H1 (cell line): ENCODE measurements at regions of chr3 and their contacts with region 1.

Region 1: DNA sequence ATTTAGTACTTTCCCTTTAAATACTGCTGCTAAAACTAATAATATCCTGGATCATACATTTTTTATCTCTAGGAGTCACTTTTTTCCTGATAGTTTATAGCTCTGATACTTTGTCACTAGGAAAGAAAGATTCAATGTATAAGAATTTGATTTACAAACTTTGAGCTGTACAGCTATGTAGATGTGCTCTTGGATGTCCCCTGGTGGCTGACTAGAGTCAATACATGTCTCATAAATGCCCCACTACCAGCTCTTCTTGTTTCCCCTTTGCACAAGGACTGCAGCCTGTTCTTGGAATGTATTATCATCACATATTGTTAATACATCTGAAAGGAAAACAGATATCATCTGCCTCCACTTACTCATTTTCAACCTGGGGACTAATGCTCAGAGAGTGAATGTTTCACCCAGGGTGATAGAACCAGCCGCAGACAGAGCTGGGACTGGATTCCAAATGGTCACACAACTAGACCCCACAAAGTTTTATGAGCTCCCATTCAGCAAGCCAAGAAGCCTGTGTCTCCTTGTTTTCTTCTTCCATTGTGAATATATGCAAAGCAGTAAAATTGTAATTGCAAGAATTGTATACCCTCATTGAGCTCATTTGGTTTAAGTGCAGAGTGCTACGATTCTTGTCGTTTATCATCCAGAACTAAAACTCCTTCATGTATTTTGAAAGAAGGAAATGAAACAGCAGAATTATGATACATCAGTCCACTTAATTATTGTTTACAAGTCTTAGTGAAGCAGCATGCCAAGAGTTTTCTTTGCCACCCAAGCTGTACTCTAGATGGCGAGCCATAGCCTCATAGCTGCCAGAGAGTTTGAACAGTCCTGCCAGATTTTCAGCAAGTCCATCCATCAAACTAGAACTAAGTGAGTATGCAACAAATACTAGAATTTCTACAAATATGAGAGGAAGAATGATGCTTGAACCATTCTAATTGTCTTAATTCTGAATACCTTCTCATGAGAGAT is 261.6 kb upstream of the LMCD1 start:
- DNase-seq: peak in 1 of 2 experiments; percentile 49
- H3K4me3 ChIP-seq: no peak overlapping the region
- H3K27ac ChIP-seq: no peak overlapping the region
- H3K4me1 ChIP-seq: no peaks in the 10 kb centered on the region; a peak in 1 of 7 replicates
- H3K27me3 ChIP-seq: no peaks in the 10 kb centered on the region
- CTCF ChIP-seq: peak in 2 of 3 experiments; percentile 60 to 70; a peak in 3 of 4 replicates
- EP300 ChIP-seq: no peak
- POLR2A ChIP-seq: no peak
- RAD21 ChIP-seq: peak; percentile 64 to 71

Region 2: DNA sequence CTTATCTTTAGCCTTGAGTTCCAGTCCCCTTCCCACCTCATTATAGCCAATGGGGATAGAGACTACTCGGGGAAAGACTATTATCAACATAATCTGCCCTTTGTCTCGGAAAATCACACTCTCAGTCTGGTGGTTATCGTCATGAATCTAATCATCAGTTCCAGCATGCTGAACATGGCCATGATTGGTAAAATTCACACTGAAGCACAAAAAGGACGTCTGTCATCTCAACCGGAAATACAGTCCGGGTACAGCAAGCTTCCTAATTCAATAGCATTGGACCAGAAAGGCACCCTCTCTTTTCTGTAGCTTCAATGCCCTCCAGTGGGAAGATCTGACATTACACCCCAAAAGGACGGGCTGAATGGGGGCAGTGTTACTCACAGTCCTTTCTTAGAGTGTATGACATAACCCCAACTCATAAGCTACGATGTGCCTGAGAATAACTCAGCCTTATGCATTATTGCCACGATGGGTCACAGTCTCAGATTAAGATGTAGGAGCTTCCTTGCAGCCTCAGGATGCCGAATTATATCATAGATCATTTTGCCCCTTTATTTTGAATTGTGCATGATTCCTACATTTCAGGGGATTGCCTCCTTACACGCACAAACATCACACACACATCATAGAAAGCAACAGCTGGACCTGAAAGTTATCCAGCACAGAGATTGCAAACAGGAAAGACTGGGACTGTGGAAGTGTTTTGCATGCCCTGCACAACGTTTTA is 128.8 kb before region 1 on chr3:
- CTCF ChIA-PET with region 1: interaction called, 22 read pairs
- POLR2A ChIA-PET with region 1: no interaction called
- DNase-seq: peak; percentile 34 to 86
- H3K4me3 ChIP-seq: no peak overlapping the region
- H3K27ac ChIP-seq: no peak overlapping the region
- H3K4me1 ChIP-seq: peaks cover 0 to 21% (median 8%) of the 10 kb centered on the region in 4 experiments; a peak in 5 of 7 replicates
- H3K27me3 ChIP-seq: no peaks in the 10 kb centered on the region
- CTCF ChIP-seq: peak; percentile 42 to 88 (median 87)
- EP300 ChIP-seq: no peak
- POLR2A ChIP-seq: no peak
- RAD21 ChIP-seq: peak; percentile 97 to 98

Region 3: GRCh38 chr3:8197384-8197783 is 42.6 kb before region 1 on chr3:
- CTCF ChIA-PET with region 1: no interaction called
- POLR2A ChIA-PET with region 1: no interaction called
- DNase-seq: no peak
- H3K4me3 ChIP-seq: no peak overlapping the region
- H3K27ac ChIP-seq: no peak overlapping the region
- H3K4me1 ChIP-seq: no peaks in the 10 kb centered on the region; a peak in 1 of 7 replicates
- H3K27me3 ChIP-seq: no peaks in the 10 kb centered on the region
- CTCF ChIP-seq: no peak
- EP300 ChIP-seq: no peak
- POLR2A ChIP-seq: no peak
- RAD21 ChIP-seq: no peak

Region 4: GRCh38 chr3:8254489-8254888 is 14.5 kb after region 1 on chr3:
- CTCF ChIA-PET with region 1: interaction called, 69 read pairs
- POLR2A ChIA-PET with region 1: no interaction called
- DNase-seq: no peak
- H3K4me3 ChIP-seq: no peak overlapping the region
- H3K27ac ChIP-seq: no peak overlapping the region
- H3K4me1 ChIP-seq: no peaks in the 10 kb centered on the region
- H3K27me3 ChIP-seq: no peaks in the 10 kb centered on the region
- CTCF ChIP-seq: no peak
- EP300 ChIP-seq: no peak
- POLR2A ChIP-seq: no peak
- RAD21 ChIP-seq: no peak

Region 5: DNA sequence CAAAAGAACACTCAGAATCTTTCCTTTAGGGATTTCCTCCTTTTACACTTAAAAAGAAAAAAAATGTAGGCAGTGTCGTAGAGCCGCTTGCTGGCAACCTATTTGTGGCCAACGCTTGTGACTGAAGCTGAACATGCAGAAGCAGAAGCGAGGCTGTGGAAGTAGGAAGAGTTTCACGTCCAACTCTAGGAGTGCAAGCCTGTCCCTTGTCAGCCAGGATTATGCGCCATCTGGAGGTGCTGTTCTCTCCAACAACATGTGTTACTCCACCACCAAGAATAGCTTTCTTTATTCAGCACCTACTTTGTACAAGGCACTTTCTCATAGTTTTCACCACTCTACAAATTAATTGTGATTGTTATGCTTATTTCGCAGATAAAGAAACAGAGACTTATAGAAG is 38.4 kb after region 1 on chr3:
- CTCF ChIA-PET with region 1: interaction called, 14 read pairs
- POLR2A ChIA-PET with region 1: no interaction called
- DNase-seq: no peak
- H3K4me3 ChIP-seq: no peak overlapping the region
- H3K27ac ChIP-seq: no peak overlapping the region
- H3K4me1 ChIP-seq: peaks cover 4 to 9% (median 7%) of the 10 kb centered on the region in 4 experiments
- H3K27me3 ChIP-seq: peaks cover 0 to 1% (median 0%) of the 10 kb centered on the region in 4 experiments; a peak in 1 of 7 replicates
- CTCF ChIP-seq: peak in 2 of 3 experiments; percentile 17 to 30; a peak in 2 of 4 replicates
- EP300 ChIP-seq: no peak
- POLR2A ChIP-seq: no peak
- RAD21 ChIP-seq: no peak; a peak in 1 of 4 replicates

Region 6: GRCh38 chr3:8301728-8302462 is 61.9 kb after region 1 on chr3:
- CTCF ChIA-PET with region 1: interaction called, 11 read pairs
- POLR2A ChIA-PET with region 1: no interaction called
- DNase-seq: no peak
- H3K4me3 ChIP-seq: no peak overlapping the region
- H3K27ac ChIP-seq: no peak overlapping the region
- H3K4me1 ChIP-seq: no peaks in the 10 kb centered on the region
- H3K27me3 ChIP-seq: no peaks in the 10 kb centered on the region
- CTCF ChIP-seq: peak in 2 of 3 experiments; percentile 53 to 69; a peak in 2 of 4 replicates
- EP300 ChIP-seq: no peak
- POLR2A ChIP-seq: no peak
- RAD21 ChIP-seq: peak; percentile 78 to 82

Region 7: GRCh38 chr3:8622873-8623691 is 383.1 kb after region 1 on chr3:
- CTCF ChIA-PET with region 1: no interaction called
- POLR2A ChIA-PET with region 1: no interaction called
- DNase-seq: peak; percentile 61 to 89
- H3K4me3 ChIP-seq: no peak overlapping the region; a peak in 1 of 8 replicates
- H3K27ac ChIP-seq: no peak overlapping the region
- H3K4me1 ChIP-seq: peaks cover 0 to 10% (median 3%) of the 10 kb centered on the region in 4 experiments; a peak in 5 of 7 replicates
- H3K27me3 ChIP-seq: no peaks in the 10 kb centered on the region
- CTCF ChIP-seq: peak; percentile 93 to 98 (median 93)
- EP300 ChIP-seq: peak in 1 of 2 experiments; percentile 44; a peak in 1 of 3 replicates
- POLR2A ChIP-seq: no peak
- RAD21 ChIP-seq: peak; percentile 99